Activated CD4-positive, alpha-beta memory T cell treated with anti-CD3 and anti-CD28 coated beads, Interleukin-2, amount 10 ng/mL, durations not matched to agents 7 days and 5 days (primary cell): ENCODE measurements at regions of chr14 and their contacts with region 1.

Region 1: DNA sequence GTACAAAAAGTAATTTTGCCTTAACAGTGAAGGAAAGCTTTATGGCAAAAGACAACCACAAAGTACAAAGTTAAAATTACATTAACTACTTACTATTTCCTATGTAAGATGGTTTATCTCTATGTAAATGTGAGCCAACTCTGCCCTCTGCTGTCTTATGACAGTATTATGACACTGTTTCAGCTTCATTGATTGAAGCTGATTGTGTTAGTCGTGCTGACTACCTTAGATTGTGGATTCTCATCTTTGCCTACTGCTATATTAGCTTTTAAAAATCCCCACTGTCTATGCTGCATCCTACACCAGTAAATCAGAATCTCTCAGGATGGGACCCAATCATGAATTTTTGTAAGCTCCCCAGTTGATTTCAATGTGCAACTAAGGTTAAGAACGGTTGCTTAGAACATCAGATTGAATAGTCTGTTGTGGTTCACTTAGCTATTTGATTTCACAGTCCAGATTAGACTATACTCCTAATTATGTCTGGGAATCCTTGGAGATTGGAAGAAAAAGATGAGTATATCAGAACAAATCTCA is 12.2 kb upstream of the SPTB start:
- DNase-seq: peak; percentile 32
- H3K4me3 Mint-ChIP-seq: no peak overlapping the region
- H3K27ac Mint-ChIP-seq: no peak overlapping the region
- H3K4me1 Mint-ChIP-seq: no peaks in the 10 kb centered on the region
- H3K27me3 Mint-ChIP-seq: peaks cover 22% of the 10 kb centered on the region

Region 2: DNA sequence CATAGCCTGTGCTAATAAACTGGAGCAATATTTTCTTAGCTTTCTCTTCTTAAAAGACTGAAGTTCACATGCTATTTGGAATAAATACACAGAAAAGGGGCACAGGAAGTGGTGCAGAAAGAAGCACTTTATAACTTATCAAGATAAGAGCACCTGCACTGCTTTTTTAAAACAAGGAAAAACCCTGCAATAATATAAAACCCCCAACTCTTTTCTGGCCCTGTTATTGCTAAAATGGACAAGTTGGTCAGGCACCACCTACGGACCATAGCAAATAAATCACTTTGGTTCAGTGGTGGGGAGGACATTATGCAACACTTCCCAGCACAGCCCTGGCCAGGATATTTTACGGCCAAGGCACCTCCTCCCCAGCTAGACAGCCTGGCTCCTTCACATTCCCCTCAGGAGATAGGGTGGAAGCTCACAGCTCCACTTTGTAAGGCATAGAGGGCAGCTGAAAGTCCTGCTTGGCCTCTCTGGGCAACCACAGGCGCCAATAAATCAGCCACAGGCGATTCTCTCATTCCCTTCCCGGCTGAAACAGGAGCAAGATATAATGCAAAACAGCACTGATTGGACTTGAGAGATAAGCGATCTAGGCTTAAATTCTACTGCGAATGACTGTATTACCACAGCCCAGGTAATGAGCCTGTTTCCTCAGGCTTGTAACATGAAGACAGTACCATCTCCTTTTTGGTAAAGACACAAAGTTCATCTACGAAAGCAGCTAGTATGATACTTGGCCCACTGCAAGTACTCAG is 390.3 kb before region 1 on chr14:
- CTCF ChIA-PET with region 1: no interaction called
- POLR2A ChIA-PET with region 1: no interaction called
- DNase-seq: peak; percentile 18
- H3K4me3 Mint-ChIP-seq: peak overlapping the region; percentile 94
- H3K27ac Mint-ChIP-seq: peak overlapping the region; percentile 99
- H3K4me1 Mint-ChIP-seq: peaks cover 42% of the 10 kb centered on the region
- H3K27me3 Mint-ChIP-seq: no peaks in the 10 kb centered on the region

Region 3: GRCh38 chr14:64636208-64636979 is 255.5 kb before region 1 on chr14:
- CTCF ChIA-PET with region 1: interaction called, 29 read pairs
- POLR2A ChIA-PET with region 1: no interaction called
- DNase-seq: peak; percentile 74
- H3K4me3 Mint-ChIP-seq: no peak overlapping the region
- H3K27ac Mint-ChIP-seq: no peak overlapping the region
- H3K4me1 Mint-ChIP-seq: peaks cover 5% of the 10 kb centered on the region
- H3K27me3 Mint-ChIP-seq: peaks cover 13% of the 10 kb centered on the region

Region 4: DNA sequence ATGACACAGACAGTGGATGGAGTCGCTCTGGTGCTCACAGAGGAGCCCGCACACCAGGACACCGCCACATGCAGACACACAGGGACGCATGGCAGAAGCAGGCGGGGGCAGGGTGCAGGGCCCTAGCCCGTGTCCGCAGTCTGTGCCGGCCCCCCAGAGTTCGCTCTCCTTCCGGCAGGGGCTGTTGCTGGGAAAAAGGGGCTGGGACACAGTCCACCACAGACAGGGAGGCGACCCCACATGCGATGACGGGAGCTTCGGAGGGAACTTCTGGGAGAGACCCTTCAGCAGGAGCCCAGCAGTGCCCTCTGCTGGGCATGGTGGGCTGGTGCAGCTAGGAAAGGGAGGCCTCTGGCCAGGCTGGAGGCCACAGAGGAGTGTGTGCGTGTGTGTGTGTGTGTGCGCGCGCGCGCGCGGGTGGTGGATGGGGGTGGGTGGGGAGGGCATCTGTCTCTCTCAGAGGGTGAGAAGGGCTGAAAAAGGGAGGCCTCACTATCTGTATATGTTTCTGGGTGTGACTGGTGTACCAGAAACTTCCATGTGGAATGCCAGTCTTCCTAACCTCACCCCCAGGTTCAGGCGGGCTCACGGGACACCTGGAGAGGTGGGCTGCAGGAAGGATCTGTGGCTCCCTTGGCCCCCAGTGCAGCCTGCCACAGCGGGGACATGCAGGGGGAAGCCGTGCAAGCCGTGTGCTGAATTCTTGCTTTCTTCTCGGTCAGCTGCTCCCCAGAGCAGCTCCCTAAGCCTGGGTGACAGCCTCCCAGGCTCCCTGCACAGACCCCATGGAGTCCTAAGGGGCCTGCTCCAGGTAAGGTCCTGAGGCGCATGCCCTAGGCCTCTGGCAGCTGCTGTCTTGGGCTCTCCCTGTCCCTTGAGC is 127.0 kb before region 1 on chr14:
- CTCF ChIA-PET with region 1: interaction called, 13 read pairs
- POLR2A ChIA-PET with region 1: no interaction called
- DNase-seq: peak; percentile 75
- H3K4me3 Mint-ChIP-seq: no peak overlapping the region
- H3K27ac Mint-ChIP-seq: no peak overlapping the region
- H3K4me1 Mint-ChIP-seq: peaks cover 65% of the 10 kb centered on the region
- H3K27me3 Mint-ChIP-seq: peaks cover 8% of the 10 kb centered on the region

Region 5: DNA sequence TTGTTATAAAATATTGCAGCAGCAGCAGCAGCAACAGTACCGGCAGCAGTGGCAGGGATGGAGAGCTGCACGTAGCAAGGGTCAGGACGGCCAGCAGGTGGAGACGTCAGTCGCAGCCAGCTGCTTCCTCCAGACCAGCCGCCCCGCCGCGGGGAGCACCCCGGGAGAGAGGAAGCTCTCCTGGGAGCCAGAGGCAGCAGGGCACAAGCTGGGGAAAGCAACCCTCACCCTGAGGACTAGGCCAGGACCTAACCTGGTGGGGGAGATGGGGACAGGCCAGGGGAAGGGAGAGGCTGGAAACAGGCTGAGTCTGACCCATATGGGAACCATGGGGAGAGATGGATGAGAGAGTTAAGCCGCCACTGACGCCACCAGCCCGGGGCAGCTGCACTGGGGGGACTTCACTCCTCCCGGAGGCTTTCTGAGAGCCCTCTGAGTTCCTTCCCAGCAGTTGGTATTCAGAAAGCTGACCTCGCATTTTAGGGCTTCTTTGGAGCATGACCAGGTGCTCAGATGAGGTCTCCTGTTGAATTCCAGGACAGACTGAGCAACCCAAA is 68.5 kb before region 1 on chr14:
- CTCF ChIA-PET with region 1: interaction called, 77 read pairs
- POLR2A ChIA-PET with region 1: interaction called, 3 read pairs
- DNase-seq: peak; percentile 69
- H3K4me3 Mint-ChIP-seq: no peak overlapping the region
- H3K27ac Mint-ChIP-seq: no peak overlapping the region
- H3K4me1 Mint-ChIP-seq: peaks cover 5% of the 10 kb centered on the region
- H3K27me3 Mint-ChIP-seq: peaks cover 48% of the 10 kb centered on the region

Region 6: GRCh38 chr14:64857979-64858744 is 33.7 kb before region 1 on chr14:
- CTCF ChIA-PET with region 1: no interaction called
- POLR2A ChIA-PET with region 1: no interaction called
- DNase-seq: no peak
- H3K4me3 Mint-ChIP-seq: no peak overlapping the region
- H3K27ac Mint-ChIP-seq: no peak overlapping the region
- H3K4me1 Mint-ChIP-seq: no peaks in the 10 kb centered on the region
- H3K27me3 Mint-ChIP-seq: peaks cover 23% of the 10 kb centered on the region

Region 7: GRCh38 chr14:64928239-64929013 is 36.5 kb after region 1 on chr14:
- CTCF ChIA-PET with region 1: interaction called, 11 read pairs
- POLR2A ChIA-PET with region 1: no interaction called
- DNase-seq: no peak
- H3K4me3 Mint-ChIP-seq: no peak overlapping the region
- H3K27ac Mint-ChIP-seq: no peak overlapping the region
- H3K4me1 Mint-ChIP-seq: peaks cover 21% of the 10 kb centered on the region
- H3K27me3 Mint-ChIP-seq: no peaks in the 10 kb centered on the region